Activated CD8-positive, alpha-beta T cell treated with anti-CD3 and anti-CD28 coated beads, Interleukin-2, amount 10 ng/mL, durations not matched to agents 7 days and 5 days (primary cell): ENCODE measurements at regions of chr3 and their contacts with region 1.

Region 1: DNA sequence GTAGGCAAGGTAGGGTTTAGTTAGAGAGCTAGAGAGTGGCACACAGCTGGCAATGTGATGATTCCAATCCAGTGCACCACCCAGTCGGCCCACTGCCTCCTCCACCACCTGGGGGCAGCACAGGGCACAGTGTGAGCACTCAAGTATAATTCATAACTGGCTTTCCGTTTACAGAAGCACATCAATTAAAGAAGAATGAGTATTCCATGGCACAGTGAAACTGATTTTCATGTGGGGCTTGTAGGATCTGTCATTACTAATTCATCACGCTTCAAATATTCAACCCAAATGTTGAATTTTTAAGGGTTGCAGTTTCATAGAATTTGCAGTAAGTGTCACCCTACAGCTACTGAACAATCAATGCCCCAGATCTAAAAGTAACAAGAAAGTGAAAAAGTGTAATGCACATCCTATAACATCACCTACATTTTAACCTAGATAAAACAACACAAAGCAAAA is 149.9 kb downstream of the IGSF11 start:
- DNase-seq: peak; percentile 82
- ATAC-seq: peak; percentile 89
- H3K4me3 Mint-ChIP-seq: no peak overlapping the region
- H3K27ac Mint-ChIP-seq: no peak overlapping the region
- H3K4me1 Mint-ChIP-seq: peaks cover 10% of the 10 kb centered on the region
- H3K27me3 Mint-ChIP-seq: peaks cover 17% of the 10 kb centered on the region

Region 2: DNA sequence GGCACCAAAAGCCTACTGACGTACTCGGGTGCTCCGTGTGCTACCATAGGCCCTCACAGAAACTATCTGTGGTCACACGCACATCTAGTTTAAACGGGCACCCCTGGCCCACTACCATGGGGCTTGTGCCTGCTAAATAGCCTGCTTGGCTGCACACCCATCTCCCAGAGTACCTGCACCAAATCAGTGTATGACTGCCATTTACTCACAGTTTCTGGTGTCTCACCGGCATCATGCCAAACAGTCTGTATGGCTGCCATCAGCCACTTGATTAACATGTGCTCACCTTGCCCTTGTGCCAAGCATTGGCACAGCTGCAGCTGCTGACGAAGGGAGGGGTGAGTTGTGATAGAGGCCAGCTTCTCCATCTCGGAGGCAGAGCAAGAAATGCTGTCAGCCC is 82.9 kb before region 1 on chr3:
- CTCF ChIA-PET with region 1: no interaction called
- POLR2A ChIA-PET with region 1: no interaction called
- DNase-seq: no peak
- ATAC-seq: no peak
- H3K4me3 Mint-ChIP-seq: no peak overlapping the region
- H3K27ac Mint-ChIP-seq: no peak overlapping the region
- H3K4me1 Mint-ChIP-seq: no peaks in the 10 kb centered on the region
- H3K27me3 Mint-ChIP-seq: peaks cover 2% of the 10 kb centered on the region

Region 3: DNA sequence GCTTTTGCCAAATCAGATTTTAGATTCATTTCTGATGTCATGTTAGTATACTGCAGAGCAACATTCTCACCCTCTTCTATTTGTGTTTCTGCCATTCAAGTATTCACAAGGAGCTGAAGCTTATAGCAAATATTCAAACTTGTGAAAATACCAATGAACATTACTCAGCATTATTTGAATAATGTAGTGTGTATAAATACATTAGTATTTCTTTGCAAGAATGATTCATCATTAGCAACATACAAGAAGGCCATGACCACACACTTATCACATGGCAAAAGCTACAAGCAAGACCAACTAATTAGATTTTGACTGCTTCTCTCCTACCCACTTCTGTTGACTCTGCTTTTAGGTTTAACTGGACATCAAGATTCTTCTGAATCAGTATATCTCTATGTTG is 25.0 kb after region 1 on chr3:
- CTCF ChIA-PET with region 1: interaction called, 17 read pairs
- POLR2A ChIA-PET with region 1: no interaction called
- DNase-seq: no peak
- ATAC-seq: no peak
- H3K4me3 Mint-ChIP-seq: no peak overlapping the region
- H3K27ac Mint-ChIP-seq: no peak overlapping the region
- H3K4me1 Mint-ChIP-seq: peaks cover 2% of the 10 kb centered on the region
- H3K27me3 Mint-ChIP-seq: peaks cover 8% of the 10 kb centered on the region

Region 4: GRCh38 chr3:118968111-118968510 is 83.3 kb after region 1 on chr3:
- CTCF ChIA-PET with region 1: interaction called, 17 read pairs
- POLR2A ChIA-PET with region 1: no interaction called
- DNase-seq: no peak
- ATAC-seq: no peak
- H3K4me3 Mint-ChIP-seq: no peak overlapping the region
- H3K27ac Mint-ChIP-seq: no peak overlapping the region
- H3K4me1 Mint-ChIP-seq: no peaks in the 10 kb centered on the region
- H3K27me3 Mint-ChIP-seq: peaks cover 14% of the 10 kb centered on the region

Region 5: GRCh38 chr3:119042164-119042563 is 157.4 kb after region 1 on chr3:
- CTCF ChIA-PET with region 1: interaction called, 373 read pairs
- POLR2A ChIA-PET with region 1: no interaction called
- DNase-seq: no peak
- ATAC-seq: no peak
- H3K4me3 Mint-ChIP-seq: no peak overlapping the region
- H3K27ac Mint-ChIP-seq: no peak overlapping the region
- H3K4me1 Mint-ChIP-seq: no peaks in the 10 kb centered on the region
- H3K27me3 Mint-ChIP-seq: peaks cover 18% of the 10 kb centered on the region

Region 6: GRCh38 chr3:119098619-119099222 is 213.9 kb after region 1 on chr3:
- CTCF ChIA-PET with region 1: interaction called, 215 read pairs
- POLR2A ChIA-PET with region 1: no interaction called
- DNase-seq: peak; percentile 32
- ATAC-seq: no peak
- H3K4me3 Mint-ChIP-seq: no peak overlapping the region
- H3K27ac Mint-ChIP-seq: no peak overlapping the region
- H3K4me1 Mint-ChIP-seq: no peaks in the 10 kb centered on the region
- H3K27me3 Mint-ChIP-seq: peaks cover 6% of the 10 kb centered on the region

Region 7: GRCh38 chr3:119352849-119353502 is 468.2 kb after region 1 on chr3:
- CTCF ChIA-PET with region 1: interaction called, 14 read pairs
- POLR2A ChIA-PET with region 1: no interaction called
- DNase-seq: peak; percentile 27
- ATAC-seq: peak; percentile 69
- H3K4me3 Mint-ChIP-seq: no peak overlapping the region
- H3K27ac Mint-ChIP-seq: no peak overlapping the region
- H3K4me1 Mint-ChIP-seq: peaks cover 24% of the 10 kb centered on the region
- H3K27me3 Mint-ChIP-seq: peaks cover 6% of the 10 kb centered on the region